Sciatic nerve (tissue), 2 donors: ENCODE measurements at regions of chr12 and their contacts with region 1.

Region 1: DNA sequence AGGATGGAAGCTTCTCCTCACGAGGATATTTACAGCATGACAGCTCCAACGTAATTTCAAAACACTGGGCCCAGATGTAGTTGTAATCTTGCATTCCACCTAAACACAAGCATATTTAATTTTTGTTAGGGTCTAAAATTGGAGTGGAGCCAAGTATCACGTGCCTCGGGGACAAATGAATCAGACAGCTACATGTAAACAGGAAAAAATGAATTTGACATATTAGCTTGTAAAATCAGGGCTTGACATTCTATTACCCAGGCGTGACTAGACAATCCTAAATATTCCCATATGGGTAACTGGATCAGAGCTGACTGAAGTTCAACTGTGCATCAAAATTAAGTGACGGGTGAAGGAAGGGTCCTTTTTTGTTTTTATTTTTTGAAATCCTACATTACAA is 59.0 kb downstream of the MDM2 start:
- DNase-seq: no peak
- ATAC-seq: no peak

Region 2: GRCh38 chr12:68981516-68981915 is 114.6 kb after region 1 on chr12:
- intact Hi-C with region 1: no loop called
- DNase-seq: no peak
- ATAC-seq: no peak

Region 3: GRCh38 chr12:69059483-69060457 is 192.8 kb after region 1 on chr12:
- intact Hi-C with region 1: loop called (anchors 10 kb)
- DNase-seq: no peak
- ATAC-seq: no peak

Region 4: DNA sequence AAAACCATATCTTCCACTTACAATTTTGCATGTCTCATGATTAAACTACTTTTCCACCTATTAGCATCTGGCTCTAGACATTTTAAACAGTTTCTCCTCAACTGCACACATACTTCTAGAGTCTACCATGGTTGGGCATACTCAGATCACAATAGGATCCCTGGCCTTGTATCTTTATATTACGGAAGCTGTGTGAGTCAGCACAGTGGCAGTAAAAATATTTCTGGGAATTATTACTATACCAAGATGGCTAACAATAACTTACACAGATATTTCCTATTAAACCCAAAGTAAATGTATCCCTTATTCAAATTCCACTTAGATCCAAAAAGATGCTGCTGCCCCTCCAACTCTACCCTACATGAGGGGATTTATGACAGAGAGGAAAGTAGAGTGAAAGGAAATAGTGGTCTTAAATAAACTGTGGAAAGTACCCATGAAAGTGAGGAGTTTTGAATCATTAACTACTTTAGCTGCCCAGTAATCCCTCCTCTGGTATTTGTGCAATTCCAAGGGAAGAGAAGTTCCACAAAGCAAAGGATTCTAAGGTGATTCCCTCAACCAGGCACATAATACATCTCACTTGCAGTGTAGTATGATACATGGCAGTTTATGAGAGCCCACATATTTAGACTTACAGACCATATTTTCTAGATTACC is 358.4 kb after region 1 on chr12:
- intact Hi-C with region 1: no loop called
- DNase-seq: no peak
- ATAC-seq: no peak